Tibial artery (tissue), 4 donors: ENCODE measurements at regions of chr9 and their contacts with region 1.

Region 1: DNA sequence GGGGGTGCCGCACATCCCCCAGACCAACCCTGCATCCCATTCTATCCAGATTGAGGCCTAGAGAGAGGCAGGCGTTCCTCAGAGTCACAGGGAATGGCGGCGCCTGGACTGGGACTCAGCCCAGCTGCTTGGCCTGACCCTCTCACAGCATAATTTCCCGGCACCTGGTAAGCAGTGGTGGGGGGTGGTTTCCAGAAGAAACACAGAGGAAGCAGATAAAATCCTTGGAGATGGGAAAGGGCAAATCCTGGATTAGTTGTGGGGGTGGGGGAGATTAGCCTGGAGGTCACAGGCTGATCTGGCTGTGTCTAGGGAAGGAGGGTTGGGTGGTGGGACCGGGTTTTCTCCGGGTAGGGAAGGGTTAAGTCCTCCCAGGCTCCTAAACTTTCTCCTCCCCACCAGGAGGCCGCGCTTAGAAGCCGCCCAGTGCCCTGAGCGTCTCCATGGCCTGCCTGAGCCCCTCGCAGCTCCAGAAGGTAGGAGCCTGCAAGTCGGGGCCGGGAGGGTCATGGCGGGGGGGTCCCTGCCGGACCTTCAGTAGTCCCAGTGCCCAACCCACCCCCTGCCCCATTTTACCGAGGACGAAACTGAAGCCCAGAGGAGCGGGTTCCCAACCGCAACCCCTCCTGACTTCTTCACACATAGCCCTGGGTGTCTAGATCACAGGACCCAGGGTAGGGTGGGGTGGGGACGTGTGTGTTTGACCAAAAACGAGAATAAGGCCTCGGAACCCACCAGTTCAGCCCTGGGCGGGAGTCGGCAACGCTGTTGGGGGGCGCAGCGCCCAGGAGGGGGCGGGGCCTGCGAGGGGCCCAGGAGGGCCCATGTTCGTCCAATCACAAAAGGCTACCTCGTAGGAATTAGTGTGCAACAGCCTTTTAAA is 1.3 kb downstream of the PHYHD1 start:
- DNase-seq: peak; percentile 38 to 83
- H3K4me3 ChIP-seq: peak overlapping the region; percentile 52 to 63
- H3K27ac ChIP-seq: peak overlapping the region; percentile 95 to 98
- H3K4me1 ChIP-seq: peaks cover 5 to 68% (median 58%) of the 10 kb centered on the region in 4 donors
- H3K27me3 ChIP-seq: no peaks in the 10 kb centered on the region
- CTCF ChIP-seq: no peak

Region 2: GRCh38 chr9:128881901-128882681 is 40.0 kb before region 1 on chr9 and contains the starts of genes KYAT1 and LRRC8A:
- intact Hi-C with region 1: loop called (anchors 5 kb)
- DNase-seq: peak; percentile 98 to 99
- H3K4me3 ChIP-seq: peak within 1 kb of the TSS; percentile 84 to 96
- H3K27ac ChIP-seq: peak within 1 kb of the TSS; percentile 94 to 98
- H3K4me1 ChIP-seq: peaks cover 7 to 79% (median 65%) of the 10 kb centered on the region in 4 donors
- H3K27me3 ChIP-seq: no peaks in the 10 kb centered on the region
- CTCF ChIP-seq: peak in 1 of 2 experiments; percentile 10

Region 3: DNA sequence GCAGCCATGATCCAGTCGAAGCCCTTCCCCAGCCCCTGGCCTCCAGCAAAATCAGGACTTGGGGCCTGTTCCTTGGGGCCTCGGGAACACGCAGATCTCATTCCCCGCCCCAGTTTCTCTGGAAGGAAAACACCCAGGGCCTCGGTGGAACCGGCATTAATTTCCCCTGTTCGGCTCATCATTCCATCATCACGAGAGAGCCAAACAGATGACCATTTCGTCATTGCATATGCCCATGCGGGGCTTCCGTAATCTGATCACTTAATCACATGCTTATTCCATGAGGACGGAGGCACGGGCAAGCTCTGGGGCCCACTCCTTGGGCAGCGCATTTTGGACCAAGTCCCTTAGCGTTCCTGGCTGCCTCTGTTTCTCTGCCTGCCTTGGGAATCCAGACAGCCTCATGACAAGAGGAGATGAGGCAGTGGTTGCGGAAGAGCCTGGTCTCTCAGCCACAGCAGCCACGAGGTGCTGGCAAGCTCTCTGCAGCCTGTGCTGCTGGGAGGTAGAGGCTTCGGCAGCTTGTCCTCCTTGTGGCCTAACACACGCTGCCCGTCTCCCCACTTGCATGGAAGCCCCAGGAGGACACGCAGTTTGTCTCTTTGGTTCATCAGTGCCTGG is 320.9 kb after region 1 on chr9:
- intact Hi-C with region 1: no loop called
- DNase-seq: peak; percentile 87 to 89
- H3K4me3 ChIP-seq: no peak overlapping the region
- H3K27ac ChIP-seq: peak overlapping the region; percentile 39 to 45
- H3K4me1 ChIP-seq: no peaks in the 10 kb centered on the region
- H3K27me3 ChIP-seq: no peaks in the 10 kb centered on the region
- CTCF ChIP-seq: no peak